MCF 10A (cell line): ENCODE measurements at regions of chr15 and their contacts with region 1.

Region 1: GRCh38 chr15:35038660-35039451 is 46.2 kb downstream of the NANOGP8 start:
- DNase-seq: peak; percentile 51
- H3K4me3 Mint-ChIP-seq: peak overlapping the region; percentile 40
- H3K27ac Mint-ChIP-seq: peak overlapping the region; percentile 55
- H3K4me1 Mint-ChIP-seq: peaks cover 16% of the 10 kb centered on the region
- H3K27me3 Mint-ChIP-seq: no peaks in the 10 kb centered on the region
- CTCF ChIP-seq: no peak

Region 2: DNA sequence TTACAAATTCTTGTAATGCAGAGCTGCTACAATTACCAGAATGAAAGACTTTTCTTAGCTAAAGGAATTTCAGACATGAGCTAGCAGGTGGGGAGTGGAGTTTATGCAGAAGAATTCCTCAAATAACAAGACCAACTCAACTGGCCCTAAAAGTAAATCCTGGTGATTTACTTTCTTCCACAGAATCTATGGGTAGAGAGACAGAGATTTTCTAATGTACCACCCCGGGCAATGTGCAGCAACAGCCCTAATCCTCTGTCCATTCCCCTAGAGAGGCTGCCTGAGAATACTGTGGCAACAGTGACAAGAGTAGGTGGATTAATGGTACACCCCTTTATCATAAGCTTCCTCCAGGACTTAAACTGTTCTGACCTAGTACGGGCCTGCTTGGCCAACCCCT is 124.5 kb before region 1 on chr15:
- CTCF ChIA-PET with region 1: no interaction called
- POLR2A ChIA-PET with region 1: no interaction called
- intact Hi-C with region 1: no loop called
- DNase-seq: no peak
- H3K4me3 Mint-ChIP-seq: no peak overlapping the region
- H3K27ac Mint-ChIP-seq: no peak overlapping the region
- H3K4me1 Mint-ChIP-seq: no peaks in the 10 kb centered on the region
- H3K27me3 Mint-ChIP-seq: no peaks in the 10 kb centered on the region
- CTCF ChIP-seq: no peak

Region 3: GRCh38 chr15:34969340-34970097 is 69.3 kb before region 1 on chr15 and contains the start of gene AQR:
- CTCF ChIA-PET with region 1: interaction called, 3 read pairs
- POLR2A ChIA-PET with region 1: interaction called, 11 read pairs
- intact Hi-C with region 1: no loop called
- DNase-seq: peak; percentile 97
- H3K4me3 Mint-ChIP-seq: peak within 1 kb of the TSS; percentile 99
- H3K27ac Mint-ChIP-seq: peak within 1 kb of the TSS; percentile 99
- H3K4me1 Mint-ChIP-seq: peaks cover 19% of the 10 kb centered on the region
- H3K27me3 Mint-ChIP-seq: no peaks in the 10 kb centered on the region
- CTCF ChIP-seq: no peak
- total RNA-seq, gene AQR: 26.5 and 33.1 TPM in 2 replicates

Region 4: GRCh38 chr15:34987985-34988873 is 50.6 kb before region 1 on chr15 and contains the start of gene ZNF770:
- CTCF ChIA-PET with region 1: interaction called, 4 read pairs
- POLR2A ChIA-PET with region 1: interaction called, 97 read pairs
- intact Hi-C with region 1: no loop called
- DNase-seq: peak; percentile 69
- H3K4me3 Mint-ChIP-seq: peak within 1 kb of the TSS; percentile 91
- H3K27ac Mint-ChIP-seq: peak within 1 kb of the TSS; percentile 98
- H3K4me1 Mint-ChIP-seq: peaks cover 12% of the 10 kb centered on the region
- H3K27me3 Mint-ChIP-seq: no peaks in the 10 kb centered on the region
- CTCF ChIP-seq: no peak
- total RNA-seq, gene ZNF770: 61.0 and 73.6 TPM in 2 replicates

Region 5: GRCh38 chr15:35019386-35020083 is 19.3 kb before region 1 on chr15:
- CTCF ChIA-PET with region 1: no interaction called
- POLR2A ChIA-PET with region 1: interaction called, 19 read pairs
- intact Hi-C with region 1: no loop called
- DNase-seq: peak; percentile 70
- H3K4me3 Mint-ChIP-seq: peak overlapping the region; percentile 66
- H3K27ac Mint-ChIP-seq: peak overlapping the region; percentile 81
- H3K4me1 Mint-ChIP-seq: peaks cover 16% of the 10 kb centered on the region
- H3K27me3 Mint-ChIP-seq: no peaks in the 10 kb centered on the region
- CTCF ChIP-seq: no peak